Prostate gland (tissue), 2 donors: ENCODE measurements at regions of chr9 and their contacts with region 1.

Region 1: GRCh38 chr9:70805949-70806348 is 315.5 kb downstream of the TRPM3 start:
- DNase-seq: peak; percentile 15
- H3K4me3 ChIP-seq: no peak overlapping the region
- H3K27ac ChIP-seq: peak overlapping the region; percentile 30 to 71
- H3K4me1 ChIP-seq: no peaks in the 10 kb centered on the region
- H3K27me3 ChIP-seq: no peaks in the 10 kb centered on the region
- CTCF ChIP-seq: no peak
- POLR2A ChIP-seq: no peak

Region 2: GRCh38 chr9:70679845-70680244 is 126.1 kb before region 1 on chr9:
- intact Hi-C with region 1: loop called (anchors 5 kb)
- DNase-seq: no peak
- H3K4me3 ChIP-seq: no peak overlapping the region
- H3K27ac ChIP-seq: no peak overlapping the region
- H3K4me1 ChIP-seq: no peaks in the 10 kb centered on the region
- H3K27me3 ChIP-seq: no peaks in the 10 kb centered on the region
- CTCF ChIP-seq: no peak
- POLR2A ChIP-seq: no peak